Endothelial cell of umbilical vein (primary cell): ENCODE measurements at regions of chr1 and their contacts with region 1.

Region 1: DNA sequence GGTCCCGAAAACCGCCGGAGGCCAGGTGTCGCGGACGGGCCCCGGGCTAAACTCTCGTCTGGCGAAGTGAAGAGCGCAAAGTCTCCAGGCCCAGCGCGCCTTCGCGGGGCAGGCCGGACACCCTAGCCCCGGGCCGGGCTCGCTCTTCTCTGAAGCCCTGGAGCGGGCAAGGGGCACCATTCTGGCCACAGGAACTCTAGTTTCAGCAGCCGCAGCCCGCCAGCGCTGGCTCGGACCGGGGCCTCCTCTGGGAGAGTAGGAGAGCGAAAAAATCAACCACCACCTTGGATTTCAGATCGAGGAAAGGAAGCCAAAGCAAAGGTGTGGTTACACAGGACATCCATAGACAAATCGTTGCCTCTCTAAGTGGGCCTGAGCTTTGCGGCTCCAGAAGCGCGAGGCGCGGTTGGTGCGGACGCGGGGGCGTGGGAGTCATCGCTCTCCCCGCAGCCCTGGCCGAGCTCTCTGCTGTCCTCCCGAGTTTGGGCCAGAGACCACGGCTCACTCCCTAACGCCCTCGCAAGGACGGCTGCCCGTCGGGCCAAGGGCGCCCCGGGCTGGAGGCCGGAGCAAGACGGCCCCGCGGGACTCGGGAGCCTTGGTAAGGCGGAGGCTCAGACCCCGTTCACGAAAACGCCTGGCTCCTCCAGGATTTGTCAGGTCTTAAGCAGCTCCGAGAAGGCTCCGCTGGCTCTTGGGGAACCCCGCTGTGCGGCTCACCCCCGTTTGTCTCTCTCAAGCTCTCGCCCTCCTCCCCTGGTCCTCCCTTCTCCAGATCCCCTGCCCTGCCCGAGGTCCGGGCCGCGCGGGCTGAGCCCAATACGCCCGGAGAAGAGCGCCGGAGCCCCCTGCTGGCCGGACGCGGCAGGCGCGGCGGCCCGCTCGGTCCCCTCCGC is 132.9 kb upstream of the DPYD start:
- DNase-seq: peak; percentile 85
- H3K4me3 ChIP-seq: peak overlapping the region in 2 of 3 experiments; percentile 34 to 35
- H3K27ac ChIP-seq: peak overlapping the region; percentile 89
- H3K4me1 ChIP-seq: peaks cover 35% of the 10 kb centered on the region
- H3K27me3 ChIP-seq: no peaks in the 10 kb centered on the region
- CTCF ChIP-seq: peak; percentile 68 to 97
- POLR2A ChIP-seq: no peak

Region 2: GRCh38 chr1:96236156-96236739 is 1817.5 kb before region 1 on chr1:
- CTCF ChIA-PET with region 1: no interaction called
- POLR2A ChIA-PET with region 1: no interaction called
- dilution Hi-C with region 1: no loop called
- intact Hi-C with region 1: loop called (anchors 5 kb)
- DNase-seq: peak; percentile 80
- H3K4me3 ChIP-seq: no peak overlapping the region
- H3K27ac ChIP-seq: no peak overlapping the region
- H3K4me1 ChIP-seq: peaks cover 3% of the 10 kb centered on the region
- H3K27me3 ChIP-seq: peaks cover 2% of the 10 kb centered on the region in 2 experiments
- CTCF ChIP-seq: peak; percentile 40 to 49
- POLR2A ChIP-seq: no peak

Region 3: DNA sequence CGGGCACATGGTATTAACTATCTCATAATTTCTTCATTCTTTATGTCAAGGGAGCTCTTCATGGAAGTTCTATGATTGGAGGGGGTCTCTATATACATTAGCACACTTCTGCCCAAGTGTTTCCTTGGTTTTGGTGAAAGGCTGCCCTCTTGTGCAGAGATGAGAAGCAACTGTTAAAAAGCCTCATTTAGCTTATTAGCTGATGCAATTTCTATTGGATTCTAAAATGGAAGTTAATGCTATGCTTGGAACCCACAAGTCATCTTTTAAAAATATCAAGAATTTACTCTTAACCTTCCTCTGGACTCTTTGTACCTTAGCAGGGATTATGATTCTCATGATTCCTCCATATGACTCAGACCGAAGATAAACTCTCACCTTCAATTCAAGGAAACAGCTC is 1003.2 kb before region 1 on chr1:
- CTCF ChIA-PET with region 1: interaction called, 10 read pairs
- POLR2A ChIA-PET with region 1: no interaction called
- dilution Hi-C with region 1: no loop called
- intact Hi-C with region 1: loop called (anchors 2 kb)
- DNase-seq: peak; percentile 62
- H3K4me3 ChIP-seq: no peak overlapping the region
- H3K27ac ChIP-seq: no peak overlapping the region
- H3K4me1 ChIP-seq: no peaks in the 10 kb centered on the region
- H3K27me3 ChIP-seq: no peaks in the 10 kb centered on the region
- CTCF ChIP-seq: peak; percentile 19 to 47
- POLR2A ChIP-seq: no peak

Region 4: GRCh38 chr1:97529600-97529999 is 524.1 kb before region 1 on chr1:
- CTCF ChIA-PET with region 1: no interaction called
- POLR2A ChIA-PET with region 1: no interaction called
- dilution Hi-C with region 1: no loop called
- intact Hi-C with region 1: loop called (anchors 5 kb)
- DNase-seq: no peak
- H3K4me3 ChIP-seq: no peak overlapping the region
- H3K27ac ChIP-seq: no peak overlapping the region
- H3K4me1 ChIP-seq: no peaks in the 10 kb centered on the region
- H3K27me3 ChIP-seq: no peaks in the 10 kb centered on the region
- CTCF ChIP-seq: no peak
- POLR2A ChIP-seq: no peak

Region 5: DNA sequence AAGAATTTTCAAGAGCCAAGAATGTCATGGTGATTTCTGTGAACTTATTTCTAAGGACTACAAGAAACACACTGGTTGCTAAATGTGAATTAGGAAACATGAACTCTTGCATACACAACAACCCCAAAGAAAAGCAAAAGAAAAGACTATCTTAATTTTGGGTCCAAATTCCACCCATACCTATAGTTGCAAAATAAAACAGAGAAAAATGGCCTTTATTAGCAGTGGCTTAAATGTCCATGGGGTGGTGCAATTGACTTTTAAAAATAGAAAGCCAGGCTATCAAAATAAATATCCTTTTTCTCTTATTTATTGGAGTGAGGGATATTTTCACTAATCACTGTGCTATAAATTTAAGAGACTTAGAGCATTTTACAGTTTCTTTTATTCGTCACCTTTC is 52.0 kb before region 1 on chr1:
- CTCF ChIA-PET with region 1: interaction called, 16 read pairs
- POLR2A ChIA-PET with region 1: no interaction called
- dilution Hi-C with region 1: no loop called
- intact Hi-C with region 1: loop called (anchors 1 kb)
- DNase-seq: no peak
- H3K4me3 ChIP-seq: no peak overlapping the region
- H3K27ac ChIP-seq: no peak overlapping the region
- H3K4me1 ChIP-seq: peaks cover 24% of the 10 kb centered on the region
- H3K27me3 ChIP-seq: no peaks in the 10 kb centered on the region
- CTCF ChIP-seq: no peak
- POLR2A ChIP-seq: no peak

Region 6: DNA sequence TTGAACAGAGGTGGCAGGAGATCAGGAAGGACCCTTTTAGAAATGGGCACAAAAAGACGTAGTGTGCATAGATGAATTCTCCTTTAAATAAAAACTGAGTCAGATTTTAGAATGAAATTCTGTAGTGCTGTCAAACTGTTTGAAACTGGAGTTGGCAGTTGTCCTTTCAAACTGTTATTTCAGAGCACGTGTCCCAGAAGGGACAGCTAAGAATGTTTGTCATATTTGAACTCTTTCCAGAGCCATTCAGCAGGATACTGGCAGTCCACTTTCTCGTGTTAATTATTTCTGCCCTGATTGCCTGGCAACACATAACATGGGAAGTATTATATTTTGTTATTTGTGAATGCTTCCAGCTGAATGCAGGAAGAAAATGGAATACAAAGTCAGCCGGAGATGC is 79.4 kb after region 1 on chr1:
- CTCF ChIA-PET with region 1: no interaction called
- POLR2A ChIA-PET with region 1: no interaction called
- dilution Hi-C with region 1: no loop called
- intact Hi-C with region 1: no loop called
- DNase-seq: no peak
- H3K4me3 ChIP-seq: no peak overlapping the region
- H3K27ac ChIP-seq: no peak overlapping the region
- H3K4me1 ChIP-seq: no peaks in the 10 kb centered on the region
- H3K27me3 ChIP-seq: no peaks in the 10 kb centered on the region
- CTCF ChIP-seq: no peak
- POLR2A ChIP-seq: no peak

Region 7: GRCh38 chr1:98260839-98261238 is 207.1 kb after region 1 on chr1:
- CTCF ChIA-PET with region 1: interaction called, 7 read pairs
- POLR2A ChIA-PET with region 1: interaction called, 4 read pairs
- dilution Hi-C with region 1: no loop called
- intact Hi-C with region 1: loop called (anchors 1 kb)
- DNase-seq: peak; percentile 12
- H3K4me3 ChIP-seq: no peak overlapping the region
- H3K27ac ChIP-seq: no peak overlapping the region
- H3K4me1 ChIP-seq: peaks cover 41% of the 10 kb centered on the region
- H3K27me3 ChIP-seq: no peaks in the 10 kb centered on the region
- CTCF ChIP-seq: peak in 1 of 2 donors; percentile 37
- POLR2A ChIP-seq: no peak

Region 8: GRCh38 chr1:98661544-98662268 is 608.0 kb after region 1 on chr1 and contains the start of gene SNX7:
- CTCF ChIA-PET with region 1: no interaction called
- POLR2A ChIA-PET with region 1: no interaction called
- dilution Hi-C with region 1: no loop called
- intact Hi-C with region 1: loop called (anchors 10 kb)
- DNase-seq: peak; percentile 83
- H3K4me3 ChIP-seq: peak within 1 kb of the TSS; percentile 70 to 94 (median 91)
- H3K27ac ChIP-seq: peak within 1 kb of the TSS; percentile 56
- H3K4me1 ChIP-seq: peaks cover 23% of the 10 kb centered on the region
- H3K27me3 ChIP-seq: no peaks in the 10 kb centered on the region
- CTCF ChIP-seq: peak in 1 of 2 donors; percentile 43
- POLR2A ChIP-seq: no peak
- total RNA-seq, gene SNX7: 36.0 and 37.9 TPM in 2 replicates